Activated naive CD4-positive, alpha-beta T cell treated with anti-CD3 and anti-CD28 coated beads for 36 hours (primary cell): ENCODE measurements at regions of chr6 and their contacts with region 1.

Region 1: DNA sequence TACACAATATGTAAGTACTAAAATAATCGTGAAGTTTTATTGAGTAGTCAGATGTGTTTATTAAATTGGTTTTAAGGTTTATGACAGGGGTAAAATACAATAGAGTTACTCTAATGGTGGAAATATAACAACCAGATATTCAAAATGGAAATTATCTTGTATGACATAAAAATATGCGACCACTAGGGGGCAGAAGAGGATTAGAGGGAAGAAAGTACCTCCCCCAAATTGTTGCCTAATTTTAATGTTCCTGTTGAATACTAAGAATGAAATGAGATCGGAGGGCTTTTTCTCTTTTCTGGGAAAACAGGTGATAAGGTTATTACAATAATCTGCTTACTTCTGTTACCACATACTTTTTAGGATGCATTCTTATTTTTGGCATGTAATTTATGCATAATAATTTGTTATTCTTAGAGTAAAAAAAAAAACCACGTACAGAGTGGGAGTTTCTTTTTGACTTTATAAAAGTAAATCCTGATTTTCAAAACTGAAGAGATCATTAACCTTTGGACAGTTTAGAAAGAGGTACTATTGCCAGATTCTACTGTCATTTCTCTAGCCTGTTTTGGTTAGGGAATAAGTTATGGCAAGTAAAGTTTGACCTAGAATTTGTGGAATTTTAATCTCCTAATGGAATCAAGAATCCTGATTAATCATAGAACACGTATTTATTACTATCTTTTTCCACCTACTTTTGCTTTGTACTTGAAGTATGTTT is 159.2 kb downstream of the CD109 start:
- DNase-seq: peak; percentile 6
- H3K4me3 Mint-ChIP-seq: no peak overlapping the region
- H3K27ac Mint-ChIP-seq: no peak overlapping the region
- H3K4me1 Mint-ChIP-seq: no peaks in the 10 kb centered on the region
- H3K27me3 Mint-ChIP-seq: no peaks in the 10 kb centered on the region

Region 2: DNA sequence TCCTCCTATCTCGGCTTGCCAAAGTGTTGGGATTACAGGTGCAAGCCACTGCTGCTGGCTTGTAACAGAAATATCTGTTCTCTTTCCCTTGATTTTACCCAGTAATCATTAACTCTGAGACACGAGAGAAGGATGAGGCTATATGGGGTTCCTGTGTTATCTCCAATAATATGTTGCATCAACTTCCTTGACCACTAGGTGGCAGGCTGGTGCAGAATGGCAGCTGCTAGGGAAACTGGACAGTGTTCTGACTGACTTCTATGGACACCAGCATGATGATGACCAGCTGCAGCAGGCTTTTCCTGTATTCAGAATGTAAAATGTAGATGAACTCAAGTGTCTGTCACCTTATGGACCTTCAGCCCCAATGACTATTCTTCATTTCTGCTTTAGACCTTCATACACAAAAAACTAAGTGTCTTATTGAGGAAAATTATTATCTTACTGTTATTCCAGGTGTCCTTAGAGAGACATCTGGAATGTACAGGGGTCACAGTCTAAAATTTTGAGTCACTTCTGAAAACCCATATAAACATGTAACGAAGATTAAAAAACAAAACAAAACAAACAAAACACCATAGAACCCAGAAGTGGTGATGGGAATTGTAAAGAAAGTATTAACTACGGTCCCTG is 179.6 kb before region 1 on chr6:
- CTCF ChIA-PET with region 1: interaction called, 4 read pairs
- intact Hi-C with region 1: loop called (anchors 2 kb)
- DNase-seq: peak; percentile 87
- H3K4me3 Mint-ChIP-seq: no peak overlapping the region
- H3K27ac Mint-ChIP-seq: no peak overlapping the region
- H3K4me1 Mint-ChIP-seq: no peaks in the 10 kb centered on the region
- H3K27me3 Mint-ChIP-seq: peaks cover 8% of the 10 kb centered on the region

Region 3: GRCh38 chr6:73969971-73970970 is 115.1 kb after region 1 on chr6:
- CTCF ChIA-PET with region 1: interaction called, 4 read pairs
- intact Hi-C with region 1: loop called (anchors 10 kb)
- DNase-seq: peak; percentile 9
- H3K4me3 Mint-ChIP-seq: no peak overlapping the region
- H3K27ac Mint-ChIP-seq: no peak overlapping the region
- H3K4me1 Mint-ChIP-seq: no peaks in the 10 kb centered on the region
- H3K27me3 Mint-ChIP-seq: no peaks in the 10 kb centered on the region

Region 4: GRCh38 chr6:74574794-74575193 is 719.6 kb after region 1 on chr6:
- CTCF ChIA-PET with region 1: no interaction called
- intact Hi-C with region 1: loop called (anchors 10 kb)
- DNase-seq: no peak
- H3K4me3 Mint-ChIP-seq: no peak overlapping the region
- H3K27ac Mint-ChIP-seq: no peak overlapping the region
- H3K4me1 Mint-ChIP-seq: no peaks in the 10 kb centered on the region
- H3K27me3 Mint-ChIP-seq: no peaks in the 10 kb centered on the region